ENCODE measurements at regions of chr6 and their contacts with region 1.

Region 1: DNA sequence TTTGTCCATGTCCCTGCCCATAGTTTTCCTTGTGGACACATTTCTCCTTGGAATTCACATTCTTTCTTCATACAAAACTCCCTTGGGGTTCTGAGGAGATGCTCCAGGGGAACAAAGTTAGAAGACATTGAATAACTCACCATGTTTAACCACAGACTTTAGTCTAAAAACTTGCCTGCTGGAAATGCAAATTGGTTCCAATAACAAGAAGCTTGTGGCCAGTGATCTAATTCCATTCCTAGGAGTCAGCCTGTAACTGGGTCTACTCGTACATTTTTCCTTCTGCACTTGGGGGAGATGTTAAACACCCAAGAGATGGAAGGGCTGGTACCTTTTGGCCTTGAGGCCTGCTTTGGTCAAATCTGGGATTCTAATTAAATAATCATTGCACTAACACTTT is 60.2 kb downstream of the SCML4 start:
- DNase-seq: no peak
- H3K4me3 ChIP-seq: no peak overlapping the region
- H3K27ac ChIP-seq: no peak overlapping the region
- H3K4me1 ChIP-seq: no peaks in the 10 kb centered on the region
- H3K27me3 ChIP-seq: no peaks in the 10 kb centered on the region
- CTCF ChIP-seq: no peak
- EP300 ChIP-seq: no peak
- POLR2A ChIP-seq: no peak

Region 2: DNA sequence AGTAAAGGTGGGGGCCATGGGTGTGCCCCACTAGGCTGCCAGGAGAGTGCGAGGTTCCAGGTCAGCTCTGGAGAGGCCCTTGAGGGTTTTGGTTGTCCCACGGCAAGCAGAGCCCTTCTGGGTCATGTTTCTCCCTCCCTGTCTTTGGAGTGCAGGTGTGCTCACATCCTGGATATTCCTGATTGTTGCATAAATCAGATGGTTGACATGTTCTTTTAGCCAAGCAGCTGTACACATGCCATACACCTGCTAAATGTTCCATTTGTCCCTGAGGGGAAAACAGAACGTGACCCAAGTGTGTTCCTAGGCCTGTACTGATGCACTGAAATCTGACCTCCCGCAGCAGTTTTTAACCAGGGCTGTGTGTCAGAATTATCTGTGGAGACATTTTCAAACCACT is 571.1 kb before region 1 on chr6:
- in situ Hi-C with region 1: no loop called
- intact Hi-C with region 1: no loop called
- DNase-seq: no peak
- H3K4me3 ChIP-seq: no peak overlapping the region
- H3K27ac ChIP-seq: no peak overlapping the region
- H3K4me1 ChIP-seq: no peaks in the 10 kb centered on the region
- H3K27me3 ChIP-seq: no peaks in the 10 kb centered on the region
- CTCF ChIP-seq: no peak
- EP300 ChIP-seq: no peak
- POLR2A ChIP-seq: no peak

Region 3: DNA sequence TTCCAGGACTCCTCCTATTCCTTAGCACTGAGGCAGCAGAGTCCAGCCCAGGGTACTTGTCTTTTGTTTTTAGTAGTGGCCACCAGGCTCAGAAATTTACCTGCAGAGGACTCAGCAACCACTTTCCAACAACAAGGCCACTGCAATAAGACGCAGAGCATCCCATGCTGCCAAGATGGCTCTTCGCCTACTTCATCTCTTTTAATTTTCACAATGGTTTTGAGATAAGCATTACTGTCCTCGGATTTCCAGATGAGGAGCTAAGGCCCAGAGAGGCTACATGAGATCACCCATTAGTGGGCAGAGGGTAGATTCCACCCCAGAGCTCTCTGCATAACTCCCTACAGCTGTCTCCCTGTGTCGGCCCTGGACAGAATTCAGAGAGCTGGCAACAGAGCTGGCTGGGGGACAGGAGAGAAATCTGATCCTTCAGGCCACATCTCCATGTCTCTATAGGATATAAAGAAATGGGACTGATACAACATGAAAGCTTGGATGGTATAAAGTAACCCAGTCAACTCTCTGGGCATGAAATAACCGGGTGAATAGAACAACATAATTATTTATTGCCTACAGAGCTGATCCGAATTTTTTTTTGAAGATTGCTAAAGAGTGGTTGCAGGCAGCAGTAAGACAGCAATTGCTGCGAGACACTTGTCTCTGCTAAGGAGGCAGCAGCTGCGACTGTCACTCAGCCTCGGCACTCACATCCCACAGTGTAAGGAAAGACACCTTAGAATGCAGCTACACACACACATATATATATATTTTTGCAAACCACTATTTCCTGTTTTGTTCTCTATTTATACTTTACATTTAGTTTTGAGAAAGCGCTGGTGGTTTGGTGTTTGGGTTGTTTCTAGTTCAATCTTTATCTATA is 23.0 kb after region 1 on chr6:
- in situ Hi-C with region 1: no loop called
- intact Hi-C with region 1: loop called (anchors 2 kb)
- DNase-seq: peak; percentile 17
- H3K4me3 ChIP-seq: no peak overlapping the region
- H3K27ac ChIP-seq: peak overlapping the region in 2 of 4 donors; percentile 4 to 37
- H3K4me1 ChIP-seq: peaks cover 0 to 2% (median 0%) of the 10 kb centered on the region in 4 donors
- H3K27me3 ChIP-seq: no peaks in the 10 kb centered on the region
- CTCF ChIP-seq: no peak
- EP300 ChIP-seq: no peak
- POLR2A ChIP-seq: no peak

Region 4: DNA sequence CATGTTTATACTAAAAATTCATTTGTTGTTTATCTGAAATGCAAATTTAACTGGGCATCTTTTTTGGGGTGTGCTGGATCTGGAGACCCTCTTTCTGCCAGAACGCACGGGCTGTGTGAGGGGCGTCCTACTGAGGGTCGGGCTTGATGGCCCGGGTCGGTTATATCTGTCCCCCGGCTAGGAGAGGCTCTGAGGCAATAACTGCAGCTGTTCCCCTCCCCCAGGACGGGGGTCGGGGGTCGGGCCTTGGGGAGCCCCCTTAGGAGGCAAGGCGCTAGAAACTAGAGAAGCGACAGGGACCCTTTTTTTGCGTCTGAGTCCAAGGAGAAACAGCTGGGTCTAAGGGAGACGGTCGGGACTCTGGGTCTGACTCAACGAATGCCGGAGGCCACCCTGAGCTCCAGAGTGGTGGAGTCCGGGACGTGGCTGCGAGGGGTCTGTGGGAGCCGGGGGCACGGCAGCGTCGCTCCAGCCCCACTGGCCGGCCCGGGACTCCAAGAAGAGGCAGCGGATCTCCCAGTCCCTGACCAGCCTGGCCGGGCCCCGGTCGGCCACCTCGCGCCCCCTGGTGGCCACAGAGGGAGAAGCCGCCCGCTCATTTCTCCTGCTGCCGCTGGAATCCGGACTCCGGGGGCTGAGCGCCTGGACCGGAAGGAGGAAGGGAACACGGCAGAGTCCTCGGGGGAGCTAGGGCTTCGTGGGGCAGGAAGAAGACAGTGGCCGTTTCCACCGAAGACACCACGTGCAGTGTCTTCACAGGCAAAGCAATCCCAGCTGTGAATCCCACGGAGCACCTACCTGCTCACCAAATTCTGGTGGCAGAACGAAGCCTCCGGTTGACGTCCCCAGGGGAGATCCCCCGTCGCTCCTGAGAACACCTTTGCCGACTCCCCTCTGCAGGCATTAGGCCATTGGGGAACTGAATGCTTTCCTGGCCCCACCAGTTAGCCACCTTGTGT is 84.2 kb after region 1 on chr6:
- in situ Hi-C with region 1: no loop called
- intact Hi-C with region 1: loop called (anchors 1 kb)
- DNase-seq: peak; percentile 88
- H3K4me3 ChIP-seq: peak overlapping the region; percentile 3 to 41 (median 34)
- H3K27ac ChIP-seq: no peak overlapping the region
- H3K4me1 ChIP-seq: peaks cover 0 to 10% (median 3%) of the 10 kb centered on the region in 4 donors
- H3K27me3 ChIP-seq: peaks cover 15% of the 10 kb centered on the region
- CTCF ChIP-seq: peak; percentile 95 to 98 (median 97)
- EP300 ChIP-seq: no peak
- POLR2A ChIP-seq: no peak